Activated CD8-positive, alpha-beta T cell treated with anti-CD3 and anti-CD28 coated beads for 36 hours (primary cell): ENCODE measurements at regions of chr10 and their contacts with region 1.

Region 1: DNA sequence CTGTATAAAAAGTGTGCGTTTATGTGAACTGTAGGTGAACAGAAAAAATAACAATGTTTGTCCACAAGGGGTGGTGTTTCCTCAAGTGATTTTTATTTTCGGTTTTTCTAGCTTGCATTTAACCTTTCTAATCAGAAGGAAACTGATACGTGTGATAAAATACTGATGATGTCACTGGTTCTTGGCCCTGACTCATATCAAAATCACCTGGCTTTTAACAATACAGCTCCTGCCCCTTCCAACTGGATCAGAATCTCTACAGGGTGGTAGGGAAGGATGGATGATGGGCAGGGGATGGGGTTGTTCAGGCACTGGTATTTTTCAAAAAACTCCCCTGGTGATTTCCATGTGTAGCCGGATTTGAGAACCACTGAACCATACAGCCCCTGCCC is 10.9 kb downstream of the NPFFR1 start:
- DNase-seq: peak; percentile 20
- ATAC-seq: peak; percentile 91
- H3K4me3 Mint-ChIP-seq: no peak overlapping the region
- H3K27ac Mint-ChIP-seq: peak overlapping the region; percentile 52
- H3K4me1 Mint-ChIP-seq: peaks cover 14% of the 10 kb centered on the region
- H3K27me3 Mint-ChIP-seq: no peaks in the 10 kb centered on the region
- CTCF ChIP-seq: peak; percentile 72

Region 2: GRCh38 chr10:70255329-70256299 is 17.3 kb before region 1 on chr10:
- CTCF ChIA-PET with region 1: interaction called, 30 read pairs
- POLR2A ChIA-PET with region 1: no interaction called
- intact Hi-C with region 1: no loop called
- DNase-seq: peak; percentile 18
- ATAC-seq: peak; percentile 68
- H3K4me3 Mint-ChIP-seq: peak overlapping the region; percentile 55
- H3K27ac Mint-ChIP-seq: no peak overlapping the region
- H3K4me1 Mint-ChIP-seq: peaks cover 10% of the 10 kb centered on the region
- H3K27me3 Mint-ChIP-seq: peaks cover 35% of the 10 kb centered on the region
- CTCF ChIP-seq: no peak

Region 3: GRCh38 chr10:70348228-70348850 is 75.4 kb after region 1 on chr10:
- CTCF ChIA-PET with region 1: interaction called, 15 read pairs
- POLR2A ChIA-PET with region 1: no interaction called
- intact Hi-C with region 1: no loop called
- DNase-seq: peak; percentile 63
- ATAC-seq: peak; percentile 87
- H3K4me3 Mint-ChIP-seq: no peak overlapping the region
- H3K27ac Mint-ChIP-seq: no peak overlapping the region
- H3K4me1 Mint-ChIP-seq: no peaks in the 10 kb centered on the region
- H3K27me3 Mint-ChIP-seq: no peaks in the 10 kb centered on the region
- CTCF ChIP-seq: peak; percentile 58

Region 4: DNA sequence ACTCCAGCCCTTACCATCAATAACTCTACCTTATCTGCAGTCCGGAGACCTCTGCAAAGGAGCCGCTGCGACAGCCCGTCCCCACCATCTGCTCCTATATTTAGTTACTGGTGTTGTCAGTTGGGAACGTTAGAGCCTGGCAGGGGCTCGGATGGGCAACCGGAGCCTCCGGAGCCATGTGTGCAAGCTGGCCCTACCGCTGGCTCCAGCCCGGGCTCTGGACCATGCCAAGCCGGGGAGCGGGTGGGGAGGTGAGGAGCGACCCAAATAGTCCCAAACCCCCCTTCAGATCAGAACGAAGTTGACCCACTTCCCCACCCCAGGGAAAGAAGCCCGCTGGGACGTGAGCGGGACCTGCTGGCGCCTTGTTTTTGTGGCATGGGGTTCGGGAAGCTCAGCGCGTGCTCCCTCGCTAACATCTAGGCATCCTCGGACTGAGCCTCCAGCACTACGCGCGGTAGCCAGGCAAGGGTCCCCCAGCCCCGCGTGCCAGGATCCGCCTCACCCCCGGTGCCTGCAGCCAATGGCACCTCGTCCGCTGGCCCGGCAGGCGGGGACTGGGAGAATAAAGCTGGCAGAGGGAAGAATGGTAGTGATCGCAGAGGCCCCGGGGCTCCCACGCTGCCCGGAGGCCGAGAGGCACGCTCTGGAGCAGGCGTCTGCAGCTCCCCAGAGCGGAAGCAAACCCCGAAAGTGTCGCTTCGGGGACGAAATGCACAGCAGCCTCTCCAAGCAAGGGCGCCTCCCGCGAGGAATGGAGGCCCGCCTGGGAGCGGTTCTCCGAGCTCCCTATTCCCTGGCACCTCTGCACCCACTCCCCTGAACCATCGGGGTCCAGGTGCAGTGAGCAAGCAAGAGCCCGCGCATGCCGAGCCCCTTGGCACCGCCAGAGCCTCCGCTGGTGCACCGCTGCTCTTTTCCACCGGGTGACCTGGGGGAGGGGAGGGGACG is 108.8 kb after region 1 on chr10:
- CTCF ChIA-PET with region 1: interaction called, 10 read pairs
- POLR2A ChIA-PET with region 1: interaction called, 4 read pairs
- intact Hi-C with region 1: no loop called
- DNase-seq: peak; percentile 51
- ATAC-seq: peak; percentile 42
- H3K4me3 Mint-ChIP-seq: peak overlapping the region; percentile 84
- H3K27ac Mint-ChIP-seq: peak overlapping the region; percentile 32
- H3K4me1 Mint-ChIP-seq: peaks cover 3% of the 10 kb centered on the region
- H3K27me3 Mint-ChIP-seq: no peaks in the 10 kb centered on the region
- CTCF ChIP-seq: peak; percentile 31

Region 5: DNA sequence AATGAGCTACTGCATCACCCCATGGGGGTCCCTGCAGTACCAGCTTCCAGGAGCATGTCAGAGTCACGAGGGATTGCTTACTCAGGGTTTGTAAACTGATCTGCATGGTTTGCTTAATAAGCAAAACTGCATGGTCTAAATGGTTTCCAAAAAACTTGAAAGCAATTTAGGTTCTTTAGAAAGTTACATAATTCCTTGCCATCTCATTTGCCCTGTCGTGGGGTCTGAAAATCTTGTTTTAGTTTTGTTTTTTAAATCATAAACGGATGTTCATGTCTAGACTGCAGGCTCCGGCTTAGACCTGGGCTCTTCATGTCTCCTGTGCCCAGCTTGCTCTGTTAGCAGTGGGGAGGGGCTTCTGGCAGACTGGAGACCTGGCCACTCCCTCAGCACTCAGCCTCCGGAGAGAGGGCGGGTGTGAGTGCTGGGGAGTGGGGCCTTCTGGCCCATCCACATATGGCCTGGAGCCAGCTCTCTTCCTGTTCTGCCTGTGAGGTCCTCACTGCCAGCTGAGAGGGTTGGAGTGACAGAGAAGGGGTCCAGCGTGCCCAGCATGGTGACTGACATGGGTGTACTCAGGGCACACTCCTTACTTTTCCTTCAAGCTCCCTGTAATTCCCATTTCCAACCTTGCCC is 312.1 kb after region 1 on chr10:
- CTCF ChIA-PET with region 1: no interaction called
- POLR2A ChIA-PET with region 1: no interaction called
- intact Hi-C with region 1: no loop called
- DNase-seq: peak; percentile 28
- ATAC-seq: peak; percentile 52
- H3K4me3 Mint-ChIP-seq: no peak overlapping the region
- H3K27ac Mint-ChIP-seq: peak overlapping the region; percentile 46
- H3K4me1 Mint-ChIP-seq: peaks cover 52% of the 10 kb centered on the region
- H3K27me3 Mint-ChIP-seq: no peaks in the 10 kb centered on the region
- CTCF ChIP-seq: no peak